Colonic mucosa (tissue), 4 donors: ENCODE measurements at regions of chr6 and their contacts with region 1.

Region 1: DNA sequence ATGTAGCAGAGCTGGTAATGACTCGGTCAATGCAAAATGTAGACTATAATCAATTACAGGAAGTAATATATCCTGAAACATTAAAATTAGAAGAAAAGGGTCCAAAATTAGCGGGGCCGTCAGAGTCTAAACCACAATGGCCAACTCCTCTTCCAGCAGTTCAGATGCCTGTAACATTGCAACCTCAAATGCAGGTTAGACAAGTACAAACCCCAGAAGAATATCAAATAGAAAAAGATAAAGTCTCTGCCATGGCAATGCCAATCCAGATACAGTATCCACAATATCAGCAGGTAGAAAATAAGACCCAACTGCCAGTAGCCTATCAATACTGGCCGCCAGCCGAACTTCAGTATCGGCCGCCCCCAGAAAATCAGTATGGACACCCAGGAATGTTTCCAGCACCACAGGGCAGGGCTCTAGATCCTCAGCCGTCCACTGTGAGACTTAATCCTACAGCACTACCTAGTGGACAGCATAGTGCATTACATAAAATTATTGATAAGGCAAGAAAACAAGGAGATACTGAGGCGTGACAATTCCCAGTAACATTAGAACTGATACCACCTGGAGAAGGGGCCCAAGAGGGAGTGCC is 158.4 kb downstream of the GPX5 start:
- DNase-seq: peak; percentile 29
- H3K4me3 ChIP-seq: no peak overlapping the region
- H3K27ac ChIP-seq: no peak overlapping the region
- H3K4me1 ChIP-seq: no peaks in the 10 kb centered on the region
- H3K27me3 ChIP-seq: peaks cover 8% of the 10 kb centered on the region
- CTCF ChIP-seq: peak; percentile 45

Region 2: DNA sequence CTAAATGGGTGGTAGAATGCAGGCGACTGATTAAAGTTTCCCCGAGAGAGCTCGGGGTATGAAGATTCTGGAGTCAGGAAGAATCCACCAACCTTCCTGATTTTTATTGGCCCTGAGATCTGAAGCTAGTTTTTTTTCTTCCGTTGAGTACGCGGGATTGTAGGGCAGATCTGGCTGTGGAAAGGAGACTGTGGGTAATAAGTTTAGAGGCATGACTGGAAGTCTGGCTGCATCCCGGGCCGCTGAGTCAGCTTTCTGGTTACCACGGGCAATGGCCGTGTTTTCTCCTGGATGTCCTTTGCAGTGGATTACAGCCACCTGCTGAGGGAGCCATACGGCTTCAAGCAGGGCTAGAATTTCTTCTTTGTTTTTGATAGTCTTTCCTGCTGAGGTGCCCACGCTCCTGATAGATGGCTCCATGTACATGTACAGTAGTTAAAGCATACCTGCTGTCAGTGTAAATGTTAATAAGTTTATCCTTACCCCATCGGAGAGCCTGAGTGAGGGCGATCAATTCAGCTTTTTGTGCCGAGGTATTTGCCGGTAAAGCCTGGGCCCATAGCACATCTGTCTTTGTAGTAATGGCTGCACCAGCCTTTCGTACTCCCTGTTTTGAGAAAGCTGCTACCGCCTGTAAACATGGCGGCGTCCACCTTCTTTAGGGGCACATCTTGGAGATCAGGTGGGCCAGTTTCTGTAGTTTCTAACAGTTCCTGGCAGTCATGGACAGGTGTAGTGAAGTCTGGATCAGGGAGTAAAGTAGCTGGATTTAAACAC is 85.8 kb after region 1 on chr6:
- intact Hi-C with region 1: no loop called
- DNase-seq: no peak
- H3K4me3 ChIP-seq: no peak overlapping the region
- H3K27ac ChIP-seq: no peak overlapping the region
- H3K4me1 ChIP-seq: no peaks in the 10 kb centered on the region
- H3K27me3 ChIP-seq: peaks cover 43% of the 10 kb centered on the region
- CTCF ChIP-seq: no peak

Region 3: DNA sequence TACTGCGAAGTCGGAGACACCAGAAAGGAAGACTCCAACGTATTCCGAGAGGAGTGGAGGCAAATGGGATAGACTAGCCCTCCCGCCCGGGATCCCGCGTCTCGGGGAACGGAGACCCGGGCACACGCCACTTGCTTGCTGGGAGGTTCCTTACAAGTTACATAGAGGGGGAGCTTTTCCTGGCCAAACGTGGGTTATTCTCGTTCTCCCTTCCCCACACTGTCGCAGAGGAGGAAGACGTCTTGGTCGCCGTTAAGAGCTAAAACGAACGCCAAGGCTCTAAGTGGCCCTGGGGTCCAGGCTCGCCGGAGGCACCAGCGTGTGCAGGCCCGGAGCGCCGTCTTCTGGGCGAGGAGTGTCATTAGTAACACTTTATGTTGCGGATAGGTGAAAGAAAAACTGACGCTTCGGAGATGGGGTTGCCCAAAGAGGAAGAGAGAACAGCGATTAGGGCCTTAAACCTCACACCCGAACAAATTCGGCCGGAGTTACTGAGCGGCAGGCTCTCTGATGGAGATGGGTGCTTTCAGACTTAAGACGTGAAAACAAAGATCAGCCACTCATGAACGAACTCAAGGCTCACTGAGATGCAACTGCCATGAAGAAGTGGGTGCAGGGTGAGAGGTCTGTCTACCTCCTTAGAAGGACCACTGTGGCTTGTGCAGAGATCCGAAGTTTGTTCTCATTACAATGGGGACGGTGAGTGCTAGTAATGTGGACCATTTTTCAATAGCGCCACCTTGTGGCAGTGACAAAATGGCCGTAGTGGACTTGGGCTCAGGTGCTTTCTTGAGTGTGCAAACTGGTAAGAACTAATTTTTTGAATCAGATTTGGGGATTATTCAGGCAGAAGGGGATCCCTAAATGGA is 332.8 kb after region 1 on chr6:
- intact Hi-C with region 1: loop called (anchors 2 kb)
- DNase-seq: peak; percentile 92
- H3K4me3 ChIP-seq: peak overlapping the region; percentile 52
- H3K27ac ChIP-seq: peak overlapping the region; percentile 26
- H3K4me1 ChIP-seq: no peaks in the 10 kb centered on the region
- H3K27me3 ChIP-seq: peaks cover 6% of the 10 kb centered on the region
- CTCF ChIP-seq: peak; percentile 83

Region 4: DNA sequence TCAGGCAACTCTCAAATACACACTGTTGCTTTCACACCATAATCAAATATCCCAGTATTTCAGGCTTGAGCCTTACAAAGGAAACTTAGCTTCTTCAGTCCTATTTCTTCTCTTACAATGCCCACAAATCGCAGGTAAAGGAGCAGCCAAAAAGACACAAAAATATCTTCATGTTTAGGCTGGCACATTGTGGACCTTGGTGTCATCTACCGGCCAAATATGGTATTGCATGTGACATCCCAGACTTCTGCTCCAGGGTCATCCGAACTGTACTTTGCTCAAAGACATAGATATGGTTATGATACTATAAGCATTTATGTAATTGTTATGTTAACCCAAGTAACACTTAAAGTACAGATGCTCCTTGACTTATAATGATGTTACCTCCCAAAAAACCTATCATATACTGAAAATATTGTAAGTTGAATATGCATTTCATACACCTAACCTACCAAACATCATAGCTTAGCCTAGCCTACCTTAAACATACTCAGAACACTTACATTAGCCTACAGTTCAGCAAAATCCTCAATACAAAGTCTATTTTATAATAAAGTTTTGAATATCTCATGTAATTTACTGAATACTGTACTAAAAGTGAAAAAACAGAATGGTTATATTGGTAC is 905.5 kb after region 1 on chr6:
- intact Hi-C with region 1: loop called (anchors 5 kb)
- DNase-seq: peak; percentile 56
- H3K4me3 ChIP-seq: no peak overlapping the region
- H3K27ac ChIP-seq: no peak overlapping the region
- H3K4me1 ChIP-seq: no peaks in the 10 kb centered on the region
- H3K27me3 ChIP-seq: no peaks in the 10 kb centered on the region
- CTCF ChIP-seq: peak; percentile 95